ENCODE measurements at regions of chr17 and their contacts with region 1.

Region 1: DNA sequence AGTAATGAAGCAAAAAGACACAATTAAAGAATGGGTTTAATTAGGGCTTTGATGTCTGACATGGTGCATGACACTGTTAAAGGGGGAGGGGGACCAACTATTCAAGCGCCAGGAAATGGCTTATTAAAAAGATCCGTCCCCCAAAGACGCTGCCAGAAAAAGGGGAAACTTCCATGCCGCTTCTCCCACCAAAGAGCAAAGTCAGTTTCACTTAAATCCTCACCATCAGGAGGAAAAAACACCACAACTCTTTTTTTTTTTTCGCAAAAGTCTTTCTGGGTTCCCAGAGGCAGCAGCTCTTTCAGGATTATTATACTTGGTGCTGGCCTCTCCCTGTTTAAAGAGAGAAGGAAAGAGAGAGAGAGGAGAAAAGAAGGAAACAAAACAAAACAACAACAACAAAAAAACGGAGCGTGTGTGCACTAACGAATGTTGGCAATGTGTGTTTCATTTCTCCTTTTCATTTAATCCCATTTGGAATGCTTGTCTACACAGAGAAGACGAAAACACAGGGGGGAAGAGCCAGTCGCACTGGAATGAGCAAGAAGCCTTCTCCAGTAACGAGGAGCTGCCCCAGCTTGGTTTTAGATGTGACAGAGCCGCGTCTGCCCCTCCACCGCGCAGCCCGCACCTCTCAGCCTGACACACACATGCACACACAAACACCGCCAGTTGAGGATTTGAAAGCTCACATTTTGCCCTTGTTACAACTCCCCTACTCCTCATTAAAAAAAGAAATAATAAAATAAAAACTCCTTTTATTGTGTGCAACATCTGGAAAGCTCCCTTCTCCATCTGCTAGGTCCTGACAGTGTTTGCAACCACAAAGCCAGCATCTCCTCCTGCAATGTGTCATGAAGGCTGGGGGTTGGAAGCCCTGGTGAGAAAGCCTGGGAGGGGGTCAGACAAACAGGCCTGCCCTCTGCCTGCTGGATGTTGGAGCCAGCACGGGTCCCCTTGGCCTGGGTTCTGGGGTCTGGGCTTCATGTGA is 32.7 kb upstream of the AXIN2 start:
- DNase-seq: no peak
- ATAC-seq: no peak
- H3K4me3 ChIP-seq: no peak overlapping the region
- H3K27ac ChIP-seq: no peak overlapping the region
- H3K4me1 ChIP-seq: no peaks in the 10 kb centered on the region
- H3K27me3 ChIP-seq: no peaks in the 10 kb centered on the region
- CTCF ChIP-seq: no peak

Region 2: GRCh38 chr17:65418628-65419027 is 175.5 kb before region 1 on chr17:
- CTCF ChIA-PET with region 1: no interaction called
- POLR2A ChIA-PET with region 1: interaction called, 11 read pairs
- intact Hi-C with region 1: no loop called
- DNase-seq: peak; percentile 20
- ATAC-seq: peak; percentile 76
- H3K4me3 ChIP-seq: no peak overlapping the region
- H3K27ac ChIP-seq: no peak overlapping the region
- H3K4me1 ChIP-seq: no peaks in the 10 kb centered on the region
- H3K27me3 ChIP-seq: no peaks in the 10 kb centered on the region
- CTCF ChIP-seq: peak; percentile 43; the same call in 1 of the 2 replicates

Region 3: GRCh38 chr17:65495122-65496055 is 98.8 kb before region 1 on chr17:
- CTCF ChIA-PET with region 1: no interaction called
- POLR2A ChIA-PET with region 1: no interaction called
- intact Hi-C with region 1: no loop called
- DNase-seq: no peak
- ATAC-seq: no peak
- H3K4me3 ChIP-seq: no peak overlapping the region
- H3K27ac ChIP-seq: no peak overlapping the region
- H3K4me1 ChIP-seq: no peaks in the 10 kb centered on the region
- H3K27me3 ChIP-seq: no peaks in the 10 kb centered on the region
- CTCF ChIP-seq: no peak

Region 4: GRCh38 chr17:65609749-65610148 is 15.6 kb after region 1 on chr17:
- CTCF ChIA-PET with region 1: no interaction called
- POLR2A ChIA-PET with region 1: no interaction called
- intact Hi-C with region 1: no loop called
- DNase-seq: no peak
- ATAC-seq: no peak
- H3K4me3 ChIP-seq: no peak overlapping the region
- H3K27ac ChIP-seq: no peak overlapping the region
- H3K4me1 ChIP-seq: no peaks in the 10 kb centered on the region
- H3K27me3 ChIP-seq: no peaks in the 10 kb centered on the region
- CTCF ChIP-seq: no peak

Region 5: GRCh38 chr17:65684631-65685030 is 90.5 kb after region 1 on chr17:
- CTCF ChIA-PET with region 1: no interaction called
- POLR2A ChIA-PET with region 1: interaction called, 16 read pairs
- intact Hi-C with region 1: no loop called
- DNase-seq: peak; percentile 62
- ATAC-seq: peak; percentile 73
- H3K4me3 ChIP-seq: no peak overlapping the region
- H3K27ac ChIP-seq: no peak overlapping the region
- H3K4me1 ChIP-seq: 0 out of 2 replicates have a peak, but pooled peaks cover 8% of the 10 kb centered on the region
- H3K27me3 ChIP-seq: no peaks in the 10 kb centered on the region
- CTCF ChIP-seq: no peak

Measured in PC-3 (cell line).